ENCODE measurements at regions of chr2 and their contacts with region 1.

Region 1: GRCh38 chr2:201118121-201118960 is 2.4 kb downstream of the CFLAR start:
- DNase-seq: peak; percentile 95
- ATAC-seq: peak; percentile 64
- H3K4me3 ChIP-seq: peak overlapping the region; percentile 66 to 100 (median 97)
- H3K4me3 Mint-ChIP-seq: peak overlapping the region; percentile 98
- H3K27ac ChIP-seq: peak overlapping the region; percentile 94 to 96
- H3K27ac Mint-ChIP-seq: peak overlapping the region; percentile 98
- H3K4me1 ChIP-seq: peaks cover 63 to 72% of the 10 kb centered on the region in 2 donors
- H3K4me1 Mint-ChIP-seq: peaks cover 72% of the 10 kb centered on the region
- H3K27me3 ChIP-seq: no peaks in the 10 kb centered on the region
- H3K27me3 Mint-ChIP-seq: no peaks in the 10 kb centered on the region
- CTCF ChIP-seq: peak; percentile 55

Region 2: GRCh38 chr2:200864176-200864976 is 254.0 kb before region 1 on chr2 and contains the start of gene CLK1:
- CTCF ChIA-PET with region 1: interaction called, 6 read pairs
- POLR2A ChIA-PET with region 1: interaction called, 18 read pairs
- intact Hi-C with region 1: no loop called
- DNase-seq: peak; percentile 97
- ATAC-seq: peak; percentile 85
- H3K4me3 ChIP-seq: peak within 1 kb of the TSS; percentile 85 to 100 (median 97)
- H3K4me3 Mint-ChIP-seq: peak within 1 kb of the TSS; percentile 93
- H3K27ac ChIP-seq: peak within 1 kb of the TSS; percentile 98 to 99
- H3K27ac Mint-ChIP-seq: peak within 1 kb of the TSS; percentile 100
- H3K4me1 ChIP-seq: peaks cover 27 to 31% of the 10 kb centered on the region in 2 donors
- H3K4me1 Mint-ChIP-seq: peaks cover 41% of the 10 kb centered on the region
- H3K27me3 ChIP-seq: no peaks in the 10 kb centered on the region
- H3K27me3 Mint-ChIP-seq: no peaks in the 10 kb centered on the region
- CTCF ChIP-seq: no peak
- total RNA-seq, gene CLK1: 396 and 409 TPM in 2 replicates

Region 3: DNA sequence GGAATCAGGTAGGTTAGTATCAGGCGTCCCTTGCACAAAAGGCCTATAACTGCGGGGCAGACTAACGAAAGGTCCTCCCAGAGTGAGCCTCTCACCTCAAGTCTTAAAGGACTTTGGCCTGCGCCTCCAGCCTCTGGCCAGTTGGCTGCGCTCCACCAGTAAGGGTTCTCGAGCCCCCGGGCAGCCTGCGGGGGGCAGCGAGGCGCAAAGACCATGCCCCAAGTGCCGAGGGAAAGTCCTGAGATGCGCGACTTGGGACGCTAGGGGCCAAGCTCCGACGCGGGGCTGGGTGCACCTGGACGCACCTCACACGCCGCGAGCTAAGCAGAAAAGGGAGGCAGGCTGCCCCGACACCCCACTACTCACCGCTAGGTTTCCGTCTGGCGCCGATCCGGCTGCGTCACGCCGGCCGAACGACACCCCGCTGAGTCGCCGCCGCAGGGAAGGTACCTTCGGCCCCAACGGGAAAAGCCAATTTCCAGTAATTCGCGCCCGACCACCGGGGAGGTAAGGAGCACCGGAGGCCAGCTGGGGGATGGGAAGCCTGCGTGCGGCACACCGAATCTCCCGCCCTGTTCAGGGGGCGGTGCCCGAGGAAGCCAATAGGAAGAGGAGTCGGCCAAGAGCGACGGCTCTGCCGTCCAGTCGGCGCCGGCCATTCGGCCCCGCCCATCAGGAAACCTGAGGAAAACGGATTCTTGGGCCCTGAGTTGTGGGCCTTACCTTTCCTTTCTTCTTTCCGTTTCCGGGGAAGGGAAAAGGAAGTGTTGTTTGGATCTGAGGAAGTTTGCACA is 155.0 kb before region 1 on chr2 and contains the start of gene ORC2:
- CTCF ChIA-PET with region 1: interaction called, 5 read pairs
- POLR2A ChIA-PET with region 1: interaction called, 5 read pairs
- intact Hi-C with region 1: loop called (anchors 1 kb)
- DNase-seq: peak; percentile 97
- ATAC-seq: peak; percentile 92
- H3K4me3 ChIP-seq: peak within 1 kb of the TSS; percentile 77 to 97 (median 90)
- H3K4me3 Mint-ChIP-seq: peak within 1 kb of the TSS; percentile 92
- H3K27ac ChIP-seq: peak within 1 kb of the TSS; percentile 90 to 92
- H3K27ac Mint-ChIP-seq: peak within 1 kb of the TSS; percentile 98
- H3K4me1 ChIP-seq: peaks cover 28 to 30% of the 10 kb centered on the region in 2 donors
- H3K4me1 Mint-ChIP-seq: peaks cover 53% of the 10 kb centered on the region
- H3K27me3 ChIP-seq: no peaks in the 10 kb centered on the region
- H3K27me3 Mint-ChIP-seq: no peaks in the 10 kb centered on the region
- CTCF ChIP-seq: peak; percentile 77
- total RNA-seq, gene ORC2: 50.6 and 63.6 TPM in 2 replicates

Region 4: GRCh38 chr2:201151127-201151981 is 33.0 kb after region 1 on chr2:
- CTCF ChIA-PET with region 1: interaction called, 12 read pairs
- POLR2A ChIA-PET with region 1: interaction called, 32 read pairs
- intact Hi-C with region 1: no loop called
- DNase-seq: peak; percentile 63
- ATAC-seq: peak; percentile 58
- H3K4me3 ChIP-seq: no peak overlapping the region
- H3K4me3 Mint-ChIP-seq: peak overlapping the region; percentile 42
- H3K27ac ChIP-seq: peak overlapping the region; percentile 74 to 85
- H3K27ac Mint-ChIP-seq: peak overlapping the region; percentile 89
- H3K4me1 ChIP-seq: peaks cover 34 to 39% of the 10 kb centered on the region in 2 donors
- H3K4me1 Mint-ChIP-seq: peaks cover 55% of the 10 kb centered on the region
- H3K27me3 ChIP-seq: no peaks in the 10 kb centered on the region
- H3K27me3 Mint-ChIP-seq: no peaks in the 10 kb centered on the region
- CTCF ChIP-seq: no peak

Region 5: DNA sequence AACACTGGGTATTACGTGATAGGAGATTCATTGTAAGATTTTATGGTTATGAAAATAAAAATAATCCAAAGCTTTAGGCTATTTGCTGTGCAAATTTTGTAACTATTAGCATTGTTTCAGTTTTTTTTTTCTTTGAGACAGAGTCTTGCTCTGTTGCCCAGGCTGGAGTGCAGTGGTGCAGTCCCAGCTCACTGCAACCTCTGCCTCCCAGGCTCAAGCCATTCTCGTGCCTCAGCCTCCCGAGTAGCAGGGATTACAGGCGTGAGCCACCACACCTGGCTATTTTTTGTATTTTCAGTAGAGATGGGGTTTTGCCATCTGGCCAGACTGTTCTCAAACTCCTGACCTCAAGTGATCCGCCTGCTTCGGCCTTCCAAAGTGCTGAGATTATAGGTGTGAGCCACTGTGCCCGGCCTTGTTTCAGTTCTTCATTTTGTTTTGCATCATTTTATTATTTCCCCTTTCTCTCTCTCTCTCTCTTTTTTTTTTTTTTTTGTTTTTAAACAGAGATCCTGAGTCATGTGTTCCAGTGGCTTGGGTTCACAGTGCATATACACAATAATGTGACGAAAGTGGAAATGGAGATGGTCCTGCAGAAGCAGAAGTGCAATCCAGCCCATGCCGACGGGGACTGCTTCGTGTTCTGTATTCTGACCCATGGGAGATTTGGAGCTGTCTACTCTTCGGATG is 90.4 kb after region 1 on chr2:
- CTCF ChIA-PET with region 1: interaction called, 3 read pairs
- POLR2A ChIA-PET with region 1: interaction called, 6 read pairs
- intact Hi-C with region 1: loop called (anchors 1 kb)
- DNase-seq: peak; percentile 90
- ATAC-seq: peak; percentile 85
- H3K4me3 ChIP-seq: peak overlapping the region in 3 of 5 experiments; percentile 8 to 40 (median 31)
- H3K4me3 Mint-ChIP-seq: peak overlapping the region; percentile 68
- H3K27ac ChIP-seq: peak overlapping the region; percentile 60 to 76
- H3K27ac Mint-ChIP-seq: peak overlapping the region; percentile 94
- H3K4me1 ChIP-seq: peaks cover 34 to 42% of the 10 kb centered on the region in 2 donors
- H3K4me1 Mint-ChIP-seq: peaks cover 58% of the 10 kb centered on the region
- H3K27me3 ChIP-seq: no peaks in the 10 kb centered on the region
- H3K27me3 Mint-ChIP-seq: no peaks in the 10 kb centered on the region
- CTCF ChIP-seq: no peak

Region 6: GRCh38 chr2:201267278-201268030 is 149.1 kb after region 1 on chr2:
- CTCF ChIA-PET with region 1: no interaction called
- POLR2A ChIA-PET with region 1: no interaction called
- intact Hi-C with region 1: no loop called
- DNase-seq: no peak
- ATAC-seq: no peak
- H3K4me3 ChIP-seq: no peak overlapping the region
- H3K4me3 Mint-ChIP-seq: no peak overlapping the region
- H3K27ac ChIP-seq: peak overlapping the region in 1 of 2 donors; percentile 44
- H3K27ac Mint-ChIP-seq: peak overlapping the region; percentile 69
- H3K4me1 ChIP-seq: peaks cover 24 to 28% of the 10 kb centered on the region in 2 donors
- H3K4me1 Mint-ChIP-seq: peaks cover 62% of the 10 kb centered on the region
- H3K27me3 ChIP-seq: no peaks in the 10 kb centered on the region
- H3K27me3 Mint-ChIP-seq: no peaks in the 10 kb centered on the region
- CTCF ChIP-seq: no peak